ENCODE measurements at regions of chr6 and their contacts with region 1.

Region 1: DNA sequence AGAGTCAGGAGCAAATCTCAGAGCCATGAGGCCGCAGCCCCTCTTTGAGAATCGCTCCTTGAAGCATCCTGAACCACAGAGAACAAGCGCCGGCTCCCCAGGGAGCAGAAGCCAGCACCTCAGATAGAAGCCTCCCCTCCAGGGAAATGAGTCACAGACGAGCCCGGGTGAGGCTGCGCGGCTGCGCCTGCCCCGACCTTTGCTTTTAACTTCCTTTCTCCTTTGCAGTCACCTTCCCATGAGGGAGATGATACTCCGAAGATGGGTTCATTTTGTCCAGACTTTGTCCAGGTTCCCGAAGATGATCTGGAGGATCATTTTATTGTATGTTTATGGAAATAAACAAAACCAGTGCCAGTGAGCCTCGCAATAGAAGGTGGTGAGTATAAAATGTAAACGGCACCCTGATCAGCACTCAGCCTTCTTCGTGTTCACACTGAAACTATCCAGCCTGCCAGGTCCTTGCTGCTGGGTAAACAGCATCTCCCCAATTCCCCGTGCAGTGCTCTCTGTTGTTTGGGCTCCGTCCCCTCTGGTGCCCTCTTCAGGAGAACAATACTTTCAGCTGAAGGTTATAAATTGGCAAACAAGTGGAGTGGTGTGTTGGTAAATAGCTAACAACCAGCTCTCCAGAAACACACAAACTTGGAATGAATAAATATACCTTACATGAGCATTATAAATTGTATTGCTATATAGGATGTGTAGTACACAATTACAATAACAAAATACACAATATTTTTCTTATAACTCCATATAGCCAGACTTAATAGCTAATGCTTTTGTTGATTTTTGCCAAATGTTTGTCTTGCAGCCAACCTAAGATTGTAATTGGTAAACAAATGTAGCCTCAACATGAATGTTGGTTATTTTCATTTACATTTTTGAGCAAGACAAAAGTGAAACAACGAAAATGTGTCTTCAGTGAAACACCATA is 41.4 kb upstream of the TMEM181 start:
- DNase-seq: peak in 1 of 2 experiments; percentile 69
- H3K4me3 ChIP-seq: peak overlapping the region; percentile 16 to 58 (median 42); a peak in 7 of 8 replicates
- H3K27ac ChIP-seq: no peak overlapping the region
- H3K4me1 ChIP-seq: peaks cover 0 to 5% (median 4%) of the 10 kb centered on the region in 4 experiments; a peak in 4 of 7 replicates
- H3K27me3 ChIP-seq: no peaks in the 10 kb centered on the region
- CTCF ChIP-seq: peak; percentile 52 to 96 (median 82)
- EP300 ChIP-seq: peak in 1 of 2 experiments; percentile 75; a peak in 1 of 3 replicates
- POLR2A ChIP-seq: peak in 1 of 2 experiments; percentile 66; a peak in 2 of 3 replicates
- RAD21 ChIP-seq: peak; percentile 62 to 82

Region 2: DNA sequence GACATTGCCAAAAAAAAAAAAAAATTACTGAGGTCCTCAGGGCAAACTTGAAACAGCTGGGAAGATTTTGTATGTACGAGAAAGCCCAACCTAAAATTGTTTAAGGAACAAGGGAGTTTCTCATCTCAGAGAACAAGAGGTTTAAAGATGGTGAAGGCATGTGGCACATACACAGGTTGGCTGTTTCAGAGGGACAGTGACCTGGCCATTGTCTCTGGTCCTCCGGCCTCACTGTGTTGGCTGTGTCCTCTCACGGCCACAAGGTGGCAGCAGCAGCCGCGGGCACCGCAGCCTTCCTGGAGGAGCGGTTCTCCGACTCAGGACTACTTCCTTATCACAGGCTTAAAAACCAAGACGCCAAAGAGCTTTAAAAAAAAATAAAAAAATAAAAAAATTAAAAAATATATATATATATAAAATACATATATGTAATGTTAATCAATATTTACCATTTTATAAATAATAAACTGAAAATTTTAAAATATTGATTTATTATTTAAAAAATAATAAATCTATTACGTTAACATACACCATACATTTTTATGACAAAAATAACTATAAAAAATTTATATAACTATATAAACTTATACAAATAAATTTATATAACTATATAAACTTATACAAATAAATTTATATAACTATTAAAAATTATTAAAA is 297.5 kb before region 1 on chr6:
- CTCF ChIA-PET with region 1: interaction called, 10 read pairs
- POLR2A ChIA-PET with region 1: no interaction called
- DNase-seq: peak; percentile 58 to 90
- H3K4me3 ChIP-seq: no peak overlapping the region
- H3K27ac ChIP-seq: no peak overlapping the region
- H3K4me1 ChIP-seq: no peaks in the 10 kb centered on the region
- H3K27me3 ChIP-seq: no peaks in the 10 kb centered on the region
- CTCF ChIP-seq: peak; percentile 91 to 99 (median 93)
- EP300 ChIP-seq: no peak
- POLR2A ChIP-seq: no peak
- RAD21 ChIP-seq: peak; percentile 99

Region 3: DNA sequence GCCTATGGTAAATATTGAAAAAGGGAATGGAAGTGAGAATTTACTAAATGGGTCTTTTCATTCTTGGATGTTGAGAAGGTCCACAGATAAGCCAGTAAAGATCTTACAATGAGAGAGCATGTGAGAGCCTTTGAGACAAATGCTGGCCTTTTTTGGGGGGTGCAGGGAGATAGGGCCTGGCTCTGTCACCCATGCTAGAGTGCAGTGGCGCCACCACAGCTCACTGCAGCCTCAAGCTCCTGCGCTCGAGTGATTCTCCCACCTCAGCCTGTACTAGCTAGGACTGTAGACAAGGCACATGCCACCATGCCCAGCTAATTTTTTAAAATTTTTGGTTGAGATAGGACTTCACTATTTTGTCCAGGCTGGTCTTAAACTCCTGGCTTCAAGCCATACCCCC is 21.8 kb before region 1 on chr6:
- CTCF ChIA-PET with region 1: interaction called, 17 read pairs
- POLR2A ChIA-PET with region 1: interaction called, 3 read pairs
- DNase-seq: no peak
- H3K4me3 ChIP-seq: no peak overlapping the region
- H3K27ac ChIP-seq: no peak overlapping the region
- H3K4me1 ChIP-seq: no peaks in the 10 kb centered on the region
- H3K27me3 ChIP-seq: no peaks in the 10 kb centered on the region
- CTCF ChIP-seq: peak; percentile 42 to 66 (median 66); a peak in 3 of 4 replicates
- EP300 ChIP-seq: no peak
- POLR2A ChIP-seq: no peak
- RAD21 ChIP-seq: peak; percentile 59 to 60

Region 4: GRCh38 chr6:158548418-158549161 is 30.1 kb after region 1 on chr6:
- CTCF ChIA-PET with region 1: interaction called, 16 read pairs
- POLR2A ChIA-PET with region 1: no interaction called
- DNase-seq: no peak
- H3K4me3 ChIP-seq: no peak overlapping the region
- H3K27ac ChIP-seq: peak overlapping the region; percentile 47; the same call in 1 of the 2 replicates
- H3K4me1 ChIP-seq: peaks cover 0 to 7% (median 4%) of the 10 kb centered on the region in 4 experiments; a peak in 5 of 7 replicates
- H3K27me3 ChIP-seq: no peaks in the 10 kb centered on the region
- CTCF ChIP-seq: no peak
- EP300 ChIP-seq: no peak
- POLR2A ChIP-seq: no peak
- RAD21 ChIP-seq: no peak

Measured in H1 (cell line).